Activated naive CD4-positive, alpha-beta T cell treated with anti-CD3 and anti-CD28 coated beads for 36 hours (primary cell): ENCODE measurements at regions of chr7 and their contacts with region 1.

Region 1: GRCh38 chr7:150567169-150567568 is at the start of gene GIMAP4:
- DNase-seq: peak; percentile 64
- H3K4me3 Mint-ChIP-seq: peak within 1 kb of the TSS; percentile 85
- H3K27ac Mint-ChIP-seq: peak within 1 kb of the TSS; percentile 96
- H3K4me1 Mint-ChIP-seq: peaks cover 66% of the 10 kb centered on the region
- H3K27me3 Mint-ChIP-seq: no peaks in the 10 kb centered on the region
- total RNA-seq, gene GIMAP4: 180 to 193 TPM

Region 2: GRCh38 chr7:150388709-150389531 is 178.2 kb before region 1 on chr7:
- CTCF ChIA-PET with region 1: no interaction called
- intact Hi-C with region 1: no loop called
- DNase-seq: no peak
- H3K4me3 Mint-ChIP-seq: no peak overlapping the region
- H3K27ac Mint-ChIP-seq: no peak overlapping the region
- H3K4me1 Mint-ChIP-seq: no peaks in the 10 kb centered on the region
- H3K27me3 Mint-ChIP-seq: no peaks in the 10 kb centered on the region

Region 3: DNA sequence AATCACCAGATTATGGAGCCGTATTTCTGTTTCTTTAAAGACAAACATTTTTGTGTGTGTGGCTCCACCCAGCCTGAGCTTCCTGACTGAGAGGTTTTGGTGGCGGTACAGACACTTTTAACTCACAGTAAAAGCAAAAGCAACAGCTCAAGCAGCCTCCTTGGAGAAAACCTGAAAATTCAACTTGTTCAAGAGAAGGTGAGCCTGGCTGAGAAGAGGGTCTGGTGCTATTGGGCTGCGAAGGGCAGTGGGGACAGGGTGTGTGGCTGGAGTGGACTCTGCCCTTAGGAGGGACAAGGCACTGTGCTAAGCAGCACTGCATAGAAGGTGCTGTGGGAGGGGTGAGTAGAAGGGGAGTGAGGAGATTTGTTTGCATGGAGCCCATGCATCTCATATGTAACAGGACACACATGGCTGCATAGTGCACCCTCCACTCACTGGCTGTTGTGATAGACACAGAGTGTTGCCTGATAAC is 52.4 kb before region 1 on chr7 and contains the start of gene GIMAP7:
- CTCF ChIA-PET with region 1: interaction called, 4 read pairs
- intact Hi-C with region 1: loop called (anchors 2 kb)
- DNase-seq: peak; percentile 70
- H3K4me3 Mint-ChIP-seq: peak within 1 kb of the TSS; percentile 96
- H3K27ac Mint-ChIP-seq: peak within 1 kb of the TSS; percentile 98
- H3K4me1 Mint-ChIP-seq: peaks cover 49% of the 10 kb centered on the region
- H3K27me3 Mint-ChIP-seq: no peaks in the 10 kb centered on the region
- total RNA-seq, gene GIMAP7: 41.6 TPM

Region 4: GRCh38 chr7:150610233-150610632 is 43.1 kb after region 1 on chr7:
- CTCF ChIA-PET with region 1: no interaction called
- intact Hi-C with region 1: loop called (anchors 2 kb)
- DNase-seq: no peak
- H3K4me3 Mint-ChIP-seq: no peak overlapping the region
- H3K27ac Mint-ChIP-seq: peak overlapping the region; percentile 92
- H3K4me1 Mint-ChIP-seq: peaks cover 83% of the 10 kb centered on the region
- H3K27me3 Mint-ChIP-seq: no peaks in the 10 kb centered on the region

Region 5: DNA sequence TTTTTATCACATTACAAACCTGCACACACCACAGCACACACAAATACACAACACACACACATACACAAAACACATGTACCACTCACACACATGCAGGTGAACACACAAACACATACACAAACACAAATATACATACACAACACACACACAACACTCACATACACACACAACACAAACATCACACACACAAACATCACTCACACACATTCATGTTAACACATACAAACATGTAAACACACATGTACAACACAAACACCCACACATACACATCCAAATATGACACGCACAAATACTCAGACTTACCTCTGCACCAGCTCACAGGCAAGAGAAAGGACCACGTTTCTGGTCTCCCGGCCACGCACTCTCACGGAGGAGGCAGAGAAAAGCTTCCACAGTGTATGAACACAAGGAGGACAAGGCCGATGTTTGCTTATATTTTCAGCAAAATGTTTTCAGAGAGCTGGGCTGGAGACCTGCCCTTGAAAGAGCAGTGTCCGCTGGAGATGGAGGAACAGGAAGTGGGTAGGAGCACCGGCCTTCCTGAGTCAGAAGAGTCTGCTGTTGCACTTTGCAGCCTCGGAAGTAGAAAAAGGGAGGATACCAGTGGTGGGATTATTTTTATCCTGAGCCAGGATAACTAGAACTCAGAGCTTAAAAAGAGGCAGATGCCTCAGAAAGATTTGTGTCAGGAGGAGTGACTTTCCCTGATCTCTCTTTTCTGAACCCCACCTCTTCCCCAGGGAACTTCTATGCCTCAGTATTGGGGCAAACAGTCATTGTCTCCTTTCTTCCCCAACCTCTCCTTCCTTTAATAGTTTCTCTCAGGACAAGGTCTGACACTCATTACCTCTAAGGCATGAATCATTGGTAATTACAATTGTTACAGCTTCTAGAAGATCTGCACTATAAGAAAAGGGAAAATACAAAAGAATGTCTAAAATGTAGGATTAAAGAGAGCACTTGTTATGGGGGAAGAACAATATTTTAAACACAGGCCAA is 65.0 kb after region 1 on chr7 and contains the start of gene GIMAP6:
- CTCF ChIA-PET with region 1: interaction called, 4 read pairs
- intact Hi-C with region 1: loop called (anchors 1 kb)
- DNase-seq: peak; percentile 64
- H3K4me3 Mint-ChIP-seq: peak within 1 kb of the TSS; percentile 85
- H3K27ac Mint-ChIP-seq: peak within 1 kb of the TSS; percentile 92
- H3K4me1 Mint-ChIP-seq: peaks cover 67% of the 10 kb centered on the region
- H3K27me3 Mint-ChIP-seq: no peaks in the 10 kb centered on the region
- total RNA-seq, gene GIMAP6: 19.2 to 20.7 TPM

Region 6: GRCh38 chr7:150716368-150716767 is 149.2 kb after region 1 on chr7 and contains the start of gene GIMAP1:
- CTCF ChIA-PET with region 1: interaction called, 18 read pairs
- intact Hi-C with region 1: loop called (anchors 1 kb)
- DNase-seq: peak; percentile 81
- H3K4me3 Mint-ChIP-seq: peak within 1 kb of the TSS; percentile 97
- H3K27ac Mint-ChIP-seq: peak within 1 kb of the TSS; percentile 92
- H3K4me1 Mint-ChIP-seq: peaks cover 62% of the 10 kb centered on the region
- H3K27me3 Mint-ChIP-seq: no peaks in the 10 kb centered on the region
- total RNA-seq, gene GIMAP1: 5.1 to 5.3 TPM

Region 7: GRCh38 chr7:151951672-151952338 is 1384.6 kb after region 1 on chr7:
- CTCF ChIA-PET with region 1: no interaction called
- intact Hi-C with region 1: no loop called
- DNase-seq: no peak
- H3K4me3 Mint-ChIP-seq: no peak overlapping the region
- H3K27ac Mint-ChIP-seq: no peak overlapping the region
- H3K4me1 Mint-ChIP-seq: no peaks in the 10 kb centered on the region
- H3K27me3 Mint-ChIP-seq: no peaks in the 10 kb centered on the region